ENCODE measurements at regions of chr3 and their contacts with region 1.

Region 1: DNA sequence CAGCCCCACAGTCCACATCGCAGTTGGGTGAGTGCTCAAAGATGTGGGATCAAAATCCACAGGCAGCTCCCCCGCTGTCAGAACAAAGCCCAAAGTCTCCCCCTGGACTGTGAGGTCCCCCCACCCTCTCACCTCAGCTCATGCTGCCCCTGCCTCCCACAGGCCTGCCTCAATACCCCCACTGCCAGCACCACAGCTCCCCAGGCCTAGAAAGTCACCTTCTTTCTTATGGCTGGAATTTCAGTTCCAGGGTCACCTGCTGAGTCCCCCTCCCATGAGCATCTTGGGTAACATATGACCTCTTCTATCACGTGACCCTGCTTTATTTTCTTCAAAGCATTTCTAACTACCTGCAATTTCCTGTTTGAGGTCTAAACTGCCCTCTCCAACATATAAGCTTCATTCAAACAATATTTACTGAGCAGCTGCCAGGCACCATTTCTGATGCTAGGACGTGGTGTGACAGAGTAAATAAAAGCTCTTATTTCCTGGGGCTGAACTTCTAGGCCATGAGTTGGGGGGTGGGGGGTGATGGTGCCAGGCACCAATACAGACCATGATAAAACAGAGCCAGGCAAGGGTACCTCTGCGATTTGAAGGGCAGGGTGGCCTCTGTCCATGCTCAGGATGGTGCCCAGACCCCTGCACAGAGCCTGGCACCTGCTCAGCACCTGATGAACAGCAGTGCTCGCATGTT is 2.4 kb upstream of the TMEM89 start:
- DNase-seq: no peak
- ATAC-seq: peak; percentile 67
- H3K4me3 Mint-ChIP-seq: peak overlapping the region; percentile 12
- H3K27ac Mint-ChIP-seq: peak overlapping the region; percentile 74
- H3K4me1 Mint-ChIP-seq: peaks cover 10% of the 10 kb centered on the region
- H3K27me3 Mint-ChIP-seq: no peaks in the 10 kb centered on the region

Region 2: GRCh38 chr3:48400824-48401433 is 223.1 kb before region 1 on chr3:
- POLR2A ChIA-PET with region 1: no interaction called
- DNase-seq: peak; percentile 46
- ATAC-seq: peak; percentile 67
- H3K4me3 Mint-ChIP-seq: no peak overlapping the region
- H3K27ac Mint-ChIP-seq: no peak overlapping the region
- H3K4me1 Mint-ChIP-seq: peaks cover 1% of the 10 kb centered on the region
- H3K27me3 Mint-ChIP-seq: peaks cover 2% of the 10 kb centered on the region

Region 3: DNA sequence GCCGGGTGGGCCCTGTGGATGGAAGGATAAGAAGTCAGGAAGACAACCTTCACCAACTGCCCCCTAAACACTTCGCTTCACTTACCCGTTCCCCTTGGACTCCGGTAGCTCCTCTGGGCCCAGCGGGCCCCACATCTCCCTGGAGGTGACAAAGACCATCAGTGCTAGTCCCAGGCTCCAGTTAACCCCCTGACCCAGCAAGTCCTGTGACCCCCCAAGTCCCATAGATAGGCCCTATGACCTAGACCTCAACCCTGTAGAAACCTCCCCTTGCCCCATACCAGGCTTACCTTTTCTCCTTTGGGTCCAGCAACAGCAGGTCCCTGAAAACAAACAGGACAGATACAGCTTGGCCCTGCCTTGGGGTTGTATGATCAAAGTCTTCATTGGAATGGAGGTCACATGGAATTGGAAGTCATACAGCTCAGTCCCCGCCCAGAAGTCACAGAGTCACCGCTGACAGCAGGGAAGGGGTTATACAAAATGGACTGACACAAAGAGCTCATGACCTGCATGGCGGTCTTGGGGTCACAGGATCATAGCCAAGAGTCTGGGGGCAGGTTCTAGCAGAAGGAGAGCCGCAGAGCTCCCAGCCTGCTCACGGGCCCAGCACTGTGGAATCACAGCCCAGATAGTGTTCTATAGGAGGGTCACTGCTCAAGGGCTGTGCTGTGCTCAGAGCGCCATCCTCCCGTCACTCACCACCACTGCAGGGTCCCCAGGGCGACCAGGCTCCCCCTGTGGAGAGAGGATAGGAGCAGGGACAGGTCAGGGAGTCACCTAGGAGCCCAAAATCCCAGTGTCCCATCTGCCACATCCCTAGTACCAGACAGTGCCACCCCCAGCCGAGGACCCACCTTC is 42.1 kb before region 1 on chr3:
- POLR2A ChIA-PET with region 1: no interaction called
- DNase-seq: no peak
- ATAC-seq: no peak
- H3K4me3 Mint-ChIP-seq: no peak overlapping the region
- H3K27ac Mint-ChIP-seq: no peak overlapping the region
- H3K4me1 Mint-ChIP-seq: peaks cover 2% of the 10 kb centered on the region
- H3K27me3 Mint-ChIP-seq: peaks cover 2% of the 10 kb centered on the region

Region 4: GRCh38 chr3:48635222-48636021 is 11.4 kb after region 1 on chr3 and contains the start of gene SLC26A6:
- POLR2A ChIA-PET with region 1: interaction called, 10 read pairs
- DNase-seq: peak; percentile 97
- ATAC-seq: peak; percentile 95
- H3K4me3 Mint-ChIP-seq: peak within 1 kb of the TSS; percentile 90
- H3K27ac Mint-ChIP-seq: peak within 1 kb of the TSS; percentile 89
- H3K4me1 Mint-ChIP-seq: peaks cover 13% of the 10 kb centered on the region
- H3K27me3 Mint-ChIP-seq: no peaks in the 10 kb centered on the region
- total RNA-seq, gene SLC26A6: 54.4 to 54.7 TPM

Region 5: DNA sequence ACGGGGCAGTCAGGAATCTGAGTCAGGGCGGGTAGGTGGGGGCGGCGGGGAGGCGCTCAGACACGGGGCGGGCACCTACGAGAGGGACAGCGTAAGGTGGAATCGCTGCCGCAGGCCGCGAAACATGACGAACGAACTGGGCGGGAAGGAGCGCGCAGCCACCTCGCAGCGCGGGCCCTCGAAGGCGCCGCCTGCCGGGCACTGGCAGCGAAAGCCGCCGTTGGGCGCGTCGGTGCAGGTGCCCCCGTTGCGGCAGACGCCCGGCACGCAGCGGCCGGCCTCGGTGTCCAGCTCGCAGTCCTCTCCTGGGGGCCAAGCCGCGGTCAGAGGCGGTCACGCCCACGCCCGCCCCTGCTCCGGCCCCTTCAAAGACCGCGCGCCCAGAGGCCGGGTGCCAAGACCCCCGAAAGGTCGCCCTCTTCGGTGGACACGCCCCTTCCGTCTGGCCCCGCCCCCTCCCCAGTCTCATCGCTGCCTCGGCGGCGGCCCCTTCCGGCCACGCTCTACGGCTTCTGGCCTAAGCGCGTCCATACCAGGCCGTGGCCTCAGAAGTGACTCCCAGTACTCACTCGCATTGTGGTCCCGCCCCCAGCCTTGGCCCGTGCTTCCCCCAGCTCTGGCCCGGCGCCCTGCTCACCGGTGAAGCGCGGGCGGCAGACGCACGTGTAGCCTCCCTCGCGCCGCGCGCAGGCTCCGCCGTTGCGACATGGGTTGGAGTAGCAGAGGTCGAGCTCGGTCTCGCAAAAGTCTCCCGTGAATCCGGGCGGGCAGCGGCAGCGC is 32.3 kb after region 1 on chr3:
- POLR2A ChIA-PET with region 1: no interaction called
- DNase-seq: peak; percentile 95
- ATAC-seq: peak; percentile 77
- H3K4me3 Mint-ChIP-seq: peak overlapping the region; percentile 79
- H3K27ac Mint-ChIP-seq: peak overlapping the region; percentile 86
- H3K4me1 Mint-ChIP-seq: peaks cover 12% of the 10 kb centered on the region
- H3K27me3 Mint-ChIP-seq: peaks cover 4% of the 10 kb centered on the region

Region 6: DNA sequence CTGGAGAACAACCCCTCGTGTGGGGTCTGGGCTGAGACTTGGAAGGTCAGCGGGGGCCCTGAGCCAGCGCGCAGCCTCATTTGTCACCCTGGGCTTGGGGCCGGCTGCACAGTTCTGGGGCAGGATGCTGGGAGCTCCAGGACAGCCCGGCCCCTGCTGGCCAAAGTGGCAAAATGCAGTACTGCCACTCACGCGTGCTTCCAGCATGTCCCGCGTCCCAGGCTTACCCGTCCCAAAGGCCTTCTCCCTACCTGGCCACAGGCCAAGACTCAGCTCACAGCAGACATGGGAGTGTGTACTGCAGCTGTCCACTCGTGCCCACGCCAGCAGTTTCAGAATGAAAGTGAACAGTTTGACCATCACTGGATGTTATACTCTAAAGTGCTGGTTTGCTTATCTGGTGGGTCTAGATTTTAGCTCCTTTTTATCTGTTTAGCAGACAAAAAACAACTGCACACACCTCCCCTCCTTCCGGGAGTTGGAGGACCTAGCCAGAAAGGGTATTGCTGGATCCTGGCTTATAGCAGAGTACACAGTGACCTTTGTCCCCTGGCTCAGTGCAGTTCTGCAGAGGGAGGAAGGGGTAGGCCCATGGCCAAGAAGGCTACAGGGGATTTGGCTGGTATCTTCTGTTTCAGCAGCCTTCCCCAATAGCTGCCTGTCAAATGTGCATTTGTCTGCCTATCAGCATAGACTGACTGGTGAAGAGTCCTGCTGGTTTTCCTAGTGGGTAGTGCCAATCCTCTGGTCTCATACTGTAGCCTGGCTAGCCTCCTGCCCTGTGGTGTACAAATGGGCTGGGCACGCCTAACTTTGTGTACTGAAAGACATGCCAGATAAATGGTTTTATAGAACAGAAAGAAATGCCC is 116.2 kb after region 1 on chr3:
- POLR2A ChIA-PET with region 1: no interaction called
- DNase-seq: peak; percentile 67
- ATAC-seq: peak; percentile 90
- H3K4me3 Mint-ChIP-seq: no peak overlapping the region
- H3K27ac Mint-ChIP-seq: no peak overlapping the region
- H3K4me1 Mint-ChIP-seq: peaks cover 8% of the 10 kb centered on the region
- H3K27me3 Mint-ChIP-seq: no peaks in the 10 kb centered on the region